K562 (cell line): ENCODE measurements at regions of chr16 and their contacts with region 1.

Region 1: GRCh38 chr16:85659805-85660495 is 28.8 kb downstream of the GINS2 start:
- DNase-seq: peak; percentile 75 to 84 (median 80)
- ATAC-seq: peak; percentile 91
- H3K4me3 ChIP-seq: no peak overlapping the region
- H3K27ac ChIP-seq: no peak overlapping the region
- H3K4me1 ChIP-seq: peaks cover 0 to 33% of the 10 kb centered on the region in 2 experiments; a peak in 1 of 5 replicates
- H3K27me3 ChIP-seq: no peaks in the 10 kb centered on the region
- CTCF ChIP-seq: peak; percentile 81 to 96 (median 88)
- EP300 ChIP-seq: no peak
- POLR2A ChIP-seq: peak; percentile 49
- RAD21 ChIP-seq: peak in 1 of 2 experiments; percentile 61; a peak in 3 of 4 replicates

Region 2: DNA sequence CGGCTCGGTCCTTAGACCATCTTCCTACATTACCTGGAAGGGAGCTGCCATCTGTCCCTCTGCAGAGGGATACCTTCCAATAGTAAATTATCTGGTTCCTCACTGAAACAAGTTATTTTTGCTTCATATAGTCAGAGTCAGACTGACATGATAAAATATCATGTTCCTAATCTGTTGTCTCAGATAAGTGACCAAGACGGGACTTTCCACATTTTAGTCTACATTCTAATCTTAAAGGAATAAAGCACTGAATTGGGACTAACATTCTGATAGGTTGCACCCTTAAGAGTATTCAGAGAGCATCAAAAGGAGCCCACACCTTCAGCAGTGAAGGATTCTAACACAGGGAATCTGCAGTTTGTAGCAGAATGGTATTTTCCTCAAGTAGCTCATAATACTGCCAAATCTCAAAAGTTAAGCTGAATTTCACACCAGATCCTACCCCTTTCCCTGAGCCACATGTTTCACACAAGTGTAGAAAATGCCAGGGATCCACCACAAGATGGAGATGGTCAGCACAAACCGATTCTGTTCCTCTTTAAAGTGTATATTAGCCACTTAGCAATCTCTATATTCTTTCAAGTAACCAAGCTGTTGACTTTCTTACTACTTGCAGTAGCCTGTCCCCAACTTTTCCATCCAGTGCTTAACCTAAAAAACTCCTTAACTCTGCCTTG is 15.4 kb after region 1 on chr16:
- CTCF ChIA-PET with region 1: no interaction called
- POLR2A ChIA-PET with region 1: interaction called, 10 read pairs
- in situ Hi-C with region 1: no loop called
- intact Hi-C with region 1: no loop called
- DNase-seq: peak in 2 of 4 experiments; percentile 43 to 44
- ATAC-seq: peak; percentile 70
- H3K4me3 ChIP-seq: no peak overlapping the region
- H3K27ac ChIP-seq: no peak overlapping the region
- H3K4me1 ChIP-seq: peaks cover 0 to 4% of the 10 kb centered on the region in 2 experiments; a peak in 3 of 5 replicates
- H3K27me3 ChIP-seq: no peaks in the 10 kb centered on the region
- CTCF ChIP-seq: peak; percentile 51 to 61 (median 55)
- EP300 ChIP-seq: no peak
- POLR2A ChIP-seq: peak; percentile 48
- RAD21 ChIP-seq: peak in 1 of 2 experiments; percentile 47; a peak in 2 of 4 replicates